Left lung (tissue), 14 donors: ENCODE measurements at regions of chr16 and their contacts with region 1.

Region 1: GRCh38 chr16:23729503-23730424 is 16.7 kb upstream of the ERN2 start:
- DNase-seq: peak in 1 of 4 donors; percentile 20
- ATAC-seq: peak; percentile 50
- H3K4me3 ChIP-seq: no peak overlapping the region
- H3K27ac ChIP-seq: no peak overlapping the region
- H3K4me1 ChIP-seq: no peaks in the 10 kb centered on the region
- H3K27me3 ChIP-seq: peaks cover 0 to 8% of the 10 kb centered on the region in 2 donors
- CTCF ChIP-seq: no peak

Region 2: DNA sequence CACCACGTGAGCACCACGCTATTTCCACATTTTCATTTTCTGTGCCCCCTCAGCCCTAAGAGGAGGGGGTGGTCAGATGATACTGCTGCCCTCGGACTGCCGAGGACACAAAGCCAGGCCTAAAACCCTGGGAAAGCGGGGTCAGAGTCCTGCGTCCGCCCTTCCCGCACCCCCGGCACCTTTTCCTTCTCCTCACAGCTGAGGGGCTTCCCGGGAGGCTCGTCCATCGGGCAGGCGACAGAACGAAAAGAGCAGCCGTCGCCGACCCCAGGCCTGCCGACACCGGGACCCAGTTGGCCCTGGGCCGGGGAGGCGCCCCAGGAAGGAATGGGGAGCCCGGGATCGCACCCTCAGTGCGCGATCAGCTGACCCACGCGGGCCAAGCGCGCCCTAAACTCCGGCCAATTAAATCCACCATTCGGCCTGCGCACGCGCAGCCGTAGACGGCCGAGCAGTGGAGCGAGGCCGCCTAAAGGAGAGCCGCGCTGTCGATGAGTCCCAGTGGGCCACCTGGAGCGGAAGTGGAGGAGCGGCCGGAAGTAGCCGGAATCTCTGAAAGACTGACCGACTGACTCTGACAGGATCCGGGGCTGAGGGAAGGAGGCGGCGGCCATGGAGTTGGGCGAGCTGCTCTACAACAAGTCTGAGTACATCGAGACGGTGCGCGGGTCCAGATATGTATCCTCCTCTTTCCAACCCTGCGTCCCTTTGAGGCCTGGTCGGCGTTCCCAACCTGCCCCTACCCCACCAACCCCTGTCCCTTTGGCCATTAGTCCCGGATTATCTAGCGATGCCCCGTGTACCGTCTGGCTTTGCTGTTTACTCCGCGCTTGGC is 88.6 kb before region 1 on chr16 and contains the starts of genes DCTN5 and PALB2:
- intact Hi-C with region 1: no loop called
- DNase-seq: peak; percentile 88 to 99 (median 96)
- ATAC-seq: peak; percentile 100
- H3K4me3 ChIP-seq: peak within 1 kb of the TSS; percentile 71 to 90
- H3K27ac ChIP-seq: peak within 1 kb of the TSS; percentile 73 to 80
- H3K4me1 ChIP-seq: peaks cover 7 to 23% of the 10 kb centered on the region in 2 donors
- H3K27me3 ChIP-seq: no peaks in the 10 kb centered on the region
- CTCF ChIP-seq: no peak
- polyA plus RNA-seq, gene DCTN5: 55.1 to 66.4 (median 61.2) TPM
- polyA plus RNA-seq, gene PALB2: 14.4 to 20.4 (median 16.5) TPM

Region 3: DNA sequence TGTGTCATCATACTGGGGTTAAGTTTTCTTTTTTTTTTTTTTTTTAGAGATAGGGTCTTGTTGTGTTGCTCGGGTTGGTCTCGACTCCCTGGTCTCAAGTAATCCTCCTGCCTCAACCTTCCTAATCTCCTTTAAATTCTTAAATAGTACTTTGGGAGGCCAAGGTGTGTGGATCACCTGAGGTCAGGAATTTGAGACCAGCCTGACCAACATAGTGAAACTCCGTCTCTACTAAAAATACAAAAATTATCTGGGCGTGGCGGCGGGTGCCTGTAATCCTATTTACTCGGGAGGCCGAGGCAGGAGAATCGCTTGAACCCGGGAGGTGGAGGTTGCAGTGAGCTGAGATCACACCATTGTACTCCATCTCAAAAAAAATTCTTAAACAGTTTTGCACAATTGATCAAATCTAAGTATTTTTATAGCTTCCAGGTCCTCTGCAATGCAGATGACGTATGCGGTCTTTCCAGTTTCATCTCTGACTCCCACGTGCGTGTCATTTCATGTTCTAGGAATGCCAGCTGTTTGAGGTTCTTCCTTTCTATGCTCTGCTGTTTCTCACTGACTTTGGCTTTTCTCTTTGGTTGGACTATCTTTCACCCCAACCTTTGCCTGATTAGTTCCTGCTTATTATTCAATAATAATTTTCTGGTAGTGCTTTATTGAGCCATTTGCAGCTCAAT is 41.1 kb after region 1 on chr16:
- intact Hi-C with region 1: no loop called
- DNase-seq: no peak
- ATAC-seq: no peak
- H3K4me3 ChIP-seq: no peak overlapping the region
- H3K27ac ChIP-seq: no peak overlapping the region
- H3K4me1 ChIP-seq: no peaks in the 10 kb centered on the region
- H3K27me3 ChIP-seq: peaks cover 0 to 13% of the 10 kb centered on the region in 2 donors
- CTCF ChIP-seq: no peak

Region 4: DNA sequence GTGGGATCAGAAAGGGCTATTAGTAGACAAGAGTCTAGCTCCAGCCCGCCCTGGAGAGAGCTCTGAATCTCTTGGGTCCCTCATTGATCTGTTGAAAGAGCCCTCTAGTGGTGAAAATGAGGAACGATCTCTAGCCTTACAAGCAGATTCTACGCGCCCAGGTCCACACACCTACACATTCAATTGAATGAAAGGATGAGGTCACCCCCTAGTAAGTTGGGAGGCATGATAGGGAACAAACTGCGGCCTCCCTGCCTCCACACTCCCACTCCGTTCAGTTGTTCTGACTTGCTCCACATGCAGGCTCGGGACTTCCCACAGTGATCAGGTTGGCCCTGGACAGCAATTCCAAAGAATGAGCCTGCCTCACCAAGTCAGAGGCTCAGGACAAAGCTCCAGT is 523.4 kb after region 1 on chr16:
- intact Hi-C with region 1: loop called in 1 of 2 experiments (anchors 10 kb)
- DNase-seq: peak in 2 of 4 donors; percentile 28 to 42
- ATAC-seq: peak; percentile 87
- H3K4me3 ChIP-seq: no peak overlapping the region
- H3K27ac ChIP-seq: no peak overlapping the region
- H3K4me1 ChIP-seq: no peaks in the 10 kb centered on the region
- H3K27me3 ChIP-seq: peaks cover 10 to 65% of the 10 kb centered on the region in 2 donors
- CTCF ChIP-seq: peak; percentile 58 to 67